Heart left ventricle (tissue), 16 donors: ENCODE measurements at regions of chr20 and their contacts with region 1.

Region 1: DNA sequence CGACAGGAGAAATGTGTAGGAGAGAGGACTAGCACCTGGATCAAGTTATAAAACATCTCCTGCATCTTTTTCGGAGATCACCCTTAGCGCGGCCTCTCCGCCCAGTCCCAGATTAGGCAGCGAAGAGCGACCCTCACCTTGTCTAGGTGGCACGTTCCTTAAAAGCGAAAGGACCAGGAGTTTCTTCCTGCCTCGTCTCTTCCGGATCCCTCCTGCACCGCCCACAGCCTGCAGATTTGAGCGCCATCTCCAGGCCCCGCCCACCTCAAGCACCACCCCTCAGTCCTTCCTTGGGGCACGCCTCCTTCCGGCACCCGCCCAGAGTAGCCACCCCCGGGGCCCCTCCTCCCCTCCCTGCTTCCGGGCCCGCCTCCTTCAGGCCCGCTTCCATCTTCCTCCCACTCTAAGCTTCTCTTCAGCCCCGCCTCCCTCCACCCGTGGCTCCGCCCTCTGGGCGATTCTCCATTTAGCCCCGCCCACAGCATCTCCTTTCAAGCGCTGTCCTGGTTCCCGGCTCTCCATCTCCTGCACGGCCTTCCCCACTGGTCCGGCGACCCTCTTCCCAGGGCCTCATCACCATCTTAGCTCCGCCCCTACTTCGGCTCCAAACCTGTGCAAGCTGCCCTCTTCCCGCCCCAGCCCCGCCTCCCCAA is 662 bp upstream of the RALY start:
- DNase-seq: peak; percentile 99 to 100 (median 99)
- ATAC-seq: peak; percentile 92 to 96 (median 95)
- H3K4me3 ChIP-seq: peak overlapping the region; percentile 74 to 98 (median 90)
- H3K27ac ChIP-seq: peak overlapping the region; percentile 97 to 99 (median 99)
- H3K4me1 ChIP-seq: peaks cover 0 to 56% (median 37%) of the 10 kb centered on the region in 12 donors
- H3K27me3 ChIP-seq: no peaks in the 10 kb centered on the region
- CTCF ChIP-seq: no peak
- POLR2A ChIP-seq: peak; percentile 54 to 85

Region 2: GRCh38 chr20:33686100-33686983 is 306.7 kb before region 1 on chr20 and contains the start of gene E2F1:
- intact Hi-C with region 1: loop called in 1 of 10 experiments (anchors 10 kb)
- DNase-seq: peak; percentile 97 to 98 (median 97)
- ATAC-seq: peak; percentile 97 to 99 (median 99)
- H3K4me3 ChIP-seq: peak within 1 kb of the TSS in 10 of 12 donors; percentile 24 to 73 (median 42)
- H3K27ac ChIP-seq: peak within 1 kb of the TSS in 7 of 12 donors; percentile 12 to 70 (median 17)
- H3K4me1 ChIP-seq: peaks cover 0 to 35% (median 14%) of the 10 kb centered on the region in 12 donors
- H3K27me3 ChIP-seq: no peaks in the 10 kb centered on the region
- CTCF ChIP-seq: peak in 10 of 12 donors; percentile 29 to 72 (median 47)
- POLR2A ChIP-seq: peak in 1 of 2 donors; percentile 20
- total RNA-seq, gene E2F1: 0.32 to 6.4 (median 1.4) TPM

Region 3: GRCh38 chr20:33697129-33697528 is 295.9 kb before region 1 on chr20:
- intact Hi-C with region 1: no loop called
- DNase-seq: peak; percentile 49 to 75 (median 56)
- ATAC-seq: peak in 3 of 4 donors; percentile 65 to 87 (median 74)
- H3K4me3 ChIP-seq: no peak overlapping the region
- H3K27ac ChIP-seq: peak overlapping the region in 3 of 12 donors; percentile 29 to 59 (median 57)
- H3K4me1 ChIP-seq: peaks cover 0 to 19% (median 1%) of the 10 kb centered on the region in 12 donors
- H3K27me3 ChIP-seq: no peaks in the 10 kb centered on the region
- CTCF ChIP-seq: no peak
- POLR2A ChIP-seq: no peak

Region 4: GRCh38 chr20:33810885-33811777 is 181.9 kb before region 1 on chr20 and contains the start of gene CHMP4B:
- intact Hi-C with region 1: loop called in 3 of 10 experiments (anchors 2 to 10 kb)
- DNase-seq: peak; percentile 99 to 100 (median 99)
- ATAC-seq: peak; percentile 97 to 99 (median 98)
- H3K4me3 ChIP-seq: peak within 1 kb of the TSS; percentile 75 to 99 (median 91)
- H3K27ac ChIP-seq: peak within 1 kb of the TSS; percentile 76 to 98 (median 94)
- H3K4me1 ChIP-seq: peaks cover 4 to 49% (median 36%) of the 10 kb centered on the region in 12 donors
- H3K27me3 ChIP-seq: no peaks in the 10 kb centered on the region
- CTCF ChIP-seq: no peak
- POLR2A ChIP-seq: peak in 1 of 2 donors; percentile 90
- total RNA-seq, gene CHMP4B: 46.2 to 225 (median 106) TPM

Region 5: GRCh38 chr20:34029415-34029814 is 36.4 kb after region 1 on chr20:
- intact Hi-C with region 1: no loop called
- DNase-seq: no peak
- ATAC-seq: no peak
- H3K4me3 ChIP-seq: no peak overlapping the region
- H3K27ac ChIP-seq: no peak overlapping the region
- H3K4me1 ChIP-seq: peaks cover 0 to 47% (median 23%) of the 10 kb centered on the region in 12 donors
- H3K27me3 ChIP-seq: no peaks in the 10 kb centered on the region
- CTCF ChIP-seq: no peak
- POLR2A ChIP-seq: no peak

Region 6: GRCh38 chr20:34045294-34045693 is 52.2 kb after region 1 on chr20:
- intact Hi-C with region 1: loop called in 7 of 10 experiments (anchors 2 to 10 kb)
- DNase-seq: peak in 4 of 5 donors; percentile 51 to 67 (median 56)
- ATAC-seq: peak; percentile 50 to 77 (median 73)
- H3K4me3 ChIP-seq: no peak overlapping the region
- H3K27ac ChIP-seq: peak overlapping the region in 1 of 12 donors; percentile 2
- H3K4me1 ChIP-seq: peaks cover 0 to 88% (median 72%) of the 10 kb centered on the region in 12 donors
- H3K27me3 ChIP-seq: no peaks in the 10 kb centered on the region
- CTCF ChIP-seq: no peak
- POLR2A ChIP-seq: no peak

Region 7: DNA sequence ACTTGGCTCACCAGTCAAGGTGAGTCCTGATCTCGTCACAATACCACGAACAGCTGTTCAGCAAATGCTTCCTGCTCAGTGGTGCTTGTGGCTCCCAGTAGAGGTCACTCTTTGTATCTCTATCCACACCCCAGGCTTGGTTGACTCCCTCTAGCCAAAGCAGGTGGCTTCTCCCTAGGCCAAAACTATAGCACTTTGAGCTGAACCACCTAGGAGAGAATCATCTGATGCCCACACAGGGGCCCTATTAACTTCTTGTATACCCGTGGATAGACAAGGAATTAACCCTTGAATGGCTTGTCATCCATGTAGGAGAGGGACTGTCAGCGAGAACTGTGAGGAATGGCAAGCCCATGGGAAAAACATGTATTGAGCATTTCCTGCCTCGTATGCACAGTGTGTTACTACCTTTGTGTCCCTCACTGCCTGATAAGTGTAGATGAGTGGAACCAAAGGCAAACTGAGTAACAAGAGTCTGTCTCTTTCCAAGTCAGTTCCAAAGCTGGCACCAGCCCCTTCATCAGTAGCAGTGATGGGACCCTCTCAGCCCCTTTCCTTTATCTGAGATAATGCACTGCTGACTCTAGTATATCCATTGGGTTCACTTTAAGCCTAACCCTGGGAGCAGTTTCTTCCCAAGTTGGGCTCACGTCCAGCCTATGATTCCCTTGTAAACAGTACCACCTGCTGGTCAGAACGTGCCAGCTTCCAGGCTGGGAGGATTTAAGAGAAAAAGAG is 76.5 kb after region 1 on chr20:
- intact Hi-C with region 1: loop called in 9 of 10 experiments (anchors 2 to 10 kb)
- DNase-seq: peak; percentile 50 to 74 (median 71)
- ATAC-seq: peak; percentile 72 to 91 (median 86)
- H3K4me3 ChIP-seq: no peak overlapping the region
- H3K27ac ChIP-seq: peak overlapping the region in 1 of 12 donors; percentile 7
- H3K4me1 ChIP-seq: peaks cover 0 to 50% (median 28%) of the 10 kb centered on the region in 12 donors
- H3K27me3 ChIP-seq: no peaks in the 10 kb centered on the region
- CTCF ChIP-seq: peak; percentile 75 to 93 (median 87)
- POLR2A ChIP-seq: no peak